ENCODE measurements at regions of chr3 and their contacts with region 1.

Region 1: GRCh38 chr3:13495921-13496723 is 16.0 kb downstream of the HDAC11 start:
- DNase-seq: peak; percentile 62 to 68 (median 63)
- H3K4me3 ChIP-seq: no peak overlapping the region
- H3K4me3 Mint-ChIP-seq: no peak overlapping the region
- H3K27ac ChIP-seq: no peak overlapping the region
- H3K27ac Mint-ChIP-seq: no peak overlapping the region
- H3K4me1 ChIP-seq: no peaks in the 10 kb centered on the region
- H3K4me1 Mint-ChIP-seq: peaks cover 0 to 5% (median under 1%) of the 10 kb centered on the region in 4 donors
- H3K27me3 ChIP-seq: no peaks in the 10 kb centered on the region
- H3K27me3 Mint-ChIP-seq: no peaks in the 10 kb centered on the region

Region 2: GRCh38 chr3:13091898-13092611 is 404.1 kb before region 1 on chr3:
- CTCF ChIA-PET with region 1: interaction called, 6 read pairs
- POLR2A ChIA-PET with region 1: no interaction called
- intact Hi-C with region 1: loop called (anchors 1 kb)
- DNase-seq: peak; percentile 67 to 77 (median 71)
- H3K4me3 ChIP-seq: no peak overlapping the region
- H3K4me3 Mint-ChIP-seq: peak overlapping the region in 1 of 8 donors; percentile 60
- H3K27ac ChIP-seq: no peak overlapping the region
- H3K27ac Mint-ChIP-seq: no peak overlapping the region
- H3K4me1 ChIP-seq: peaks cover 6% of the 10 kb centered on the region
- H3K4me1 Mint-ChIP-seq: peaks cover 4 to 6% (median 5%) of the 10 kb centered on the region in 4 donors
- H3K27me3 ChIP-seq: no peaks in the 10 kb centered on the region
- H3K27me3 Mint-ChIP-seq: peaks cover 3 to 9% of the 10 kb centered on the region in 2 donors

Region 3: DNA sequence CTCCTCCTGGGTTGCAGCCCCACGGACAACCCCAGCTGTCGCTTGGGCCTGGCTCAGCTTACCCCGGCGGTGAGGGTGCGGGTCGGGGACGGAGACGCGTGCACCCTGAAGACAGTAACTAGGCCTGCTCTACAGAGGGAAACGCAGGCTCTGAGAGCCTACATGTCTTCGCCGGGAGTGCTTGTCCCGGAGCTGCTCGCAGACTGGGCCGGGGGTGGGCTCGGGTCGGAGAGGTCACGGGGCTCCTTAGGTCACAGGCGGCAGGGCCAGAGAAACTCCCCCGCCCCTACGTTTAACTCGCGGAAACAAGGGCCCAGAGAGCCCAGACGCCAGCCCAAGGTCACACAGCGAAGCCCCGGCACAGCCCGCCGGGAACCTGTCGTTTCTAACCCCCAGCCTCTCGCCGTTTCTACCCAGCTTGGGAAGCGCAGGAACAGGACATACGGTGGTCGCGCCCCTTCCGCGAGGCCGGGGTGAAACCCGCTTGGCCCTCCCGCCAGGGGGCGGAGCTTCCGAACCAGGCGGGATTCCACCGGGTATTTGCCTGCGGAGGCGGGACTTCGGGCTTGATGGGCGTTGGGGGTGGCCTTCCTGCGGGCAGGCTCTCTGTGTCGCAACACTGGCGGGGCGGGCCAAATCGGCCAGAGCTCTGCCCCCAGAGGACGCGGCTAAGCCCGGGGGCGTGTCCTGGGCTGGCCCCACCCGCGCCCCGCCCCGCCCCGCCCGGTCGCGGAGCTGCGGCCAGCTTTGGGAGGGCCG is 16.4 kb before region 1 on chr3 and contains the start of gene HDAC11:
- CTCF ChIA-PET with region 1: interaction called, 13 read pairs
- POLR2A ChIA-PET with region 1: interaction called, 7 read pairs
- intact Hi-C with region 1: no loop called
- DNase-seq: peak; percentile 96 to 97 (median 96)
- H3K4me3 ChIP-seq: peak within 1 kb of the TSS; percentile 52 to 92
- H3K4me3 Mint-ChIP-seq: peak within 1 kb of the TSS; percentile 91 to 95 (median 94)
- H3K27ac ChIP-seq: peak within 1 kb of the TSS; percentile 90
- H3K27ac Mint-ChIP-seq: peak within 1 kb of the TSS; percentile 94 to 96 (median 96)
- H3K4me1 ChIP-seq: peaks cover 28% of the 10 kb centered on the region
- H3K4me1 Mint-ChIP-seq: peaks cover 6 to 35% (median 20%) of the 10 kb centered on the region in 4 donors
- H3K27me3 ChIP-seq: no peaks in the 10 kb centered on the region
- H3K27me3 Mint-ChIP-seq: peaks cover 0 to under 1% of the 10 kb centered on the region in 2 donors
- total RNA-seq, gene HDAC11: 7.1 to 7.6 TPM

Region 4: DNA sequence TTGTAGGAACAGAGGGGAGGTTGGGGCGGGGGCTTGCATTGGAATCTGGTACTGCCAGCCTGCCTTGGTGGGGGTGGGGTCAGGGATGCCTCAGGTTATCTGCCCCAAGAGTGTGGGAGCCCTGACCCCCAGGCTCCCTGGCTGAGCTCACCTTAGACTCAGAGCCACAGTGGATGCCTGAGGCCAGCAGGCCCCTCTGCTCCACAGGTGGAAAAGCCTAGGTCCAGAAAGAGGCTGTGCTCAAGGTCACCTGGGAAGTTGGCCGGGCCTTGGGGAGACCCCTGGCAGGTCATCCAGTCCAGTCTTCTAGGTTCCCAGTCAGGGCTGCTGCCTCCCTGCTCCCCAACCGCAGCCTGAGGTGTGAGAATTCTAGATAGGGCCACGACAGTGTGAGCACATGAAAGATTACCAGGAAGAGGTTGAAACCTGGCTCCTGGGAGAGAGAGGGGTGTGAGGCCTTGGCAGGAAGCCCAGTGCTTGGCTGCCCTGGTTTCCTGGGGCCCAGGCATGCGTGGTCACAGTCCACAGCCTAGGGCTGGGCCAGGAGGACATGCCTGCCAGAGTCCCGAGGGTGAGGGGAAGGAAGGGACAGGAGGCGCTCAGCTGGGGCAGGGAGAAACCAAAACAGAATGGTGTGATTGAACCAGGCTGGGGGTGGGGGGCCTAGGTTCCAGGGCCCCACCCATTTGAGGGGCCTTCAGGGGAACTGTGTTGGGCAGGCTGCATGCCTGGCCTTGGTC is 11.1 kb before region 1 on chr3:
- CTCF ChIA-PET with region 1: interaction called, 13 read pairs
- POLR2A ChIA-PET with region 1: interaction called, 7 read pairs
- intact Hi-C with region 1: no loop called
- DNase-seq: peak; percentile 22 to 47 (median 27)
- H3K4me3 ChIP-seq: no peak overlapping the region
- H3K4me3 Mint-ChIP-seq: peak overlapping the region in 3 of 8 donors; percentile 21 to 70 (median 25)
- H3K27ac ChIP-seq: no peak overlapping the region
- H3K27ac Mint-ChIP-seq: peak overlapping the region; percentile 78 to 94 (median 90)
- H3K4me1 ChIP-seq: peaks cover 31% of the 10 kb centered on the region
- H3K4me1 Mint-ChIP-seq: peaks cover 13 to 40% (median 26%) of the 10 kb centered on the region in 4 donors
- H3K27me3 ChIP-seq: no peaks in the 10 kb centered on the region
- H3K27me3 Mint-ChIP-seq: no peaks in the 10 kb centered on the region

Region 5: GRCh38 chr3:13648060-13649001 is 152.2 kb after region 1 on chr3:
- CTCF ChIA-PET with region 1: interaction called, 174 read pairs
- POLR2A ChIA-PET with region 1: interaction called, 11 read pairs
- intact Hi-C with region 1: loop called (anchors 1 kb)
- DNase-seq: peak; percentile 62 to 76 (median 72)
- H3K4me3 ChIP-seq: no peak overlapping the region
- H3K4me3 Mint-ChIP-seq: peak overlapping the region in 6 of 8 donors; percentile 35 to 76 (median 56)
- H3K27ac ChIP-seq: no peak overlapping the region
- H3K27ac Mint-ChIP-seq: peak overlapping the region in 3 of 7 donors; percentile 10 to 83 (median 77)
- H3K4me1 ChIP-seq: peaks cover 41% of the 10 kb centered on the region
- H3K4me1 Mint-ChIP-seq: peaks cover 11 to 53% (median 35%) of the 10 kb centered on the region in 4 donors
- H3K27me3 ChIP-seq: no peaks in the 10 kb centered on the region
- H3K27me3 Mint-ChIP-seq: peaks cover 0 to 8% of the 10 kb centered on the region in 2 donors